ENCODE measurements at regions of chr9 and their contacts with region 1.

Region 1: GRCh38 chr9:110351009-110351467 is 13.4 kb upstream of the TXNDC8 start:
- DNase-seq: no peak
- H3K4me3 Mint-ChIP-seq: no peak overlapping the region
- H3K27ac Mint-ChIP-seq: no peak overlapping the region
- H3K4me1 Mint-ChIP-seq: peaks cover 5% of the 10 kb centered on the region
- H3K27me3 Mint-ChIP-seq: peaks cover 4% of the 10 kb centered on the region

Region 2: DNA sequence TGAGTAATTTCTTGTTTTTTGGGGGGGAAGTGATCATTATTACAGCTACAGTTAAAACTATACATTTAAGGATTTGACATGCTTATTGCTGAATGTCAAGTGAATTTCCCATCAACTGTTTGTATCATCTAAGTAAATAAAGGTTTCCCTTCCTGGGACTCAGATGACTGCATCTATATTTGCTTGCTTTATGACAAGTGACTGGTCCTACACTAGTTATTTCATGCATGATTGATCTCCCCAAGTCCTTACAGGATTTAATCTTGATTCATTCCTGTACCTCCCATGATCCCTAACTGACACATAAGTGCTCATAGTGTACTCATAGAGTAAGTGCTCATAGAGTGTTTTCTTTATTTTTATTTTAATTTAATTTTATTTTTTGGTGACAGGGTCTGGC is 16.2 kb before region 1 on chr9:
- intact Hi-C with region 1: loop called (anchors 1 kb)
- DNase-seq: no peak
- H3K4me3 Mint-ChIP-seq: no peak overlapping the region
- H3K27ac Mint-ChIP-seq: no peak overlapping the region
- H3K4me1 Mint-ChIP-seq: peaks cover 9% of the 10 kb centered on the region
- H3K27me3 Mint-ChIP-seq: peaks cover 2% of the 10 kb centered on the region

Measured in activated T-helper 2 cell treated with anti-CD3 and anti-CD28 coated beads, Interferon-gamma antibody, Interleukin-2, Interleukin-4, amounts not matched to agents 10 μg/mL and 5 μg/mL and 100 μg/mL, durations not matched to agents 14 hours and 24 hours and 36 hours (primary cell).